ENCODE measurements at regions of chr3 and their contacts with region 1.

Region 1: GRCh38 chr3:50192689-50193141 is 1.3 kb downstream of the GNAT1 start:
- DNase-seq: peak; percentile 16
- ATAC-seq: peak; percentile 79
- H3K4me3 ChIP-seq: no peak overlapping the region
- H3K27ac ChIP-seq: no peak overlapping the region
- H3K4me1 ChIP-seq: no peaks in the 10 kb centered on the region
- H3K27me3 ChIP-seq: no peaks in the 10 kb centered on the region; a peak in 2 of 4 replicates
- CTCF ChIP-seq: peak; percentile 93 to 97 (median 96); a peak in 5 of 6 replicates
- EP300 ChIP-seq: no peak
- POLR2A ChIP-seq: no peak
- RAD21 ChIP-seq: peak; percentile 94

Region 2: DNA sequence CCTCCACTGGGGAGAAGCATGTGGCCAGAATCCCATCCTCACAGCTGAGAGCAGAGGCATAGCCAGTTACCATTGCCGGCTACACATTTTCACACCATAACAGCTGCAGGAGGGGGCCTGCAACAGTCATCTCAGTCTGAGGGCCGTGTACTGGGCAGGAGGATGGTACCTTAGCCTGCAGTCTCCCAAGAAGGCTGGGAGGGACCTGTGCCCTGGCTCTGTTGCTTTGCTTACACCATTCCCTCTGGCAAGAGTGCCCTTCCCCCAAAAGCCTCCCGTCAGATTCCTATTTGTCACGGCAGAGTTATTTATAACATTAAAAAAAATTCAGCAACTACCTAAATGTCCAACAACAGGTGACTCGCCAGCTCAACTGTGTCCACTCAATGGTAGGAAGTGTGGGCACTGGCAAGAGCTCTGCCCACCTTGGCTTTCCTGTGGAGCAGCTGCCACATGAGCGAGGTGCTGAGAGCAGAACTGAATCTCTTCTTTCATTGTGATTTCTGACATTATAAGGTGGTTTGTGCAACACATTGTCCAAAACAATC is 327.4 kb before region 1 on chr3:
- CTCF ChIA-PET with region 1: no interaction called
- POLR2A ChIA-PET with region 1: no interaction called
- RAD21 ChIA-PET with region 1: no interaction called
- SMC1A ChIA-PET with region 1: no interaction called
- in situ Hi-C with region 1: no loop called
- intact Hi-C with region 1: no loop called
- DNase-seq: no peak
- ATAC-seq: no peak
- H3K4me3 ChIP-seq: no peak overlapping the region
- H3K27ac ChIP-seq: no peak overlapping the region
- H3K4me1 ChIP-seq: no peaks in the 10 kb centered on the region
- H3K27me3 ChIP-seq: peaks cover 5 to 8% of the 10 kb centered on the region in 2 experiments; a peak in 3 of 4 replicates
- CTCF ChIP-seq: no peak
- EP300 ChIP-seq: no peak
- POLR2A ChIP-seq: no peak
- RAD21 ChIP-seq: no peak

Region 3: GRCh38 chr3:50088725-50089608 is 103.7 kb before region 1 on chr3 and contains the start of gene RBM5:
- CTCF ChIA-PET with region 1: no interaction called
- POLR2A ChIA-PET with region 1: no interaction called
- RAD21 ChIA-PET with region 1: no interaction called
- SMC1A ChIA-PET with region 1: no interaction called
- in situ Hi-C with region 1: no loop called
- intact Hi-C with region 1: no loop called
- DNase-seq: peak; percentile 64
- ATAC-seq: peak; percentile 100
- H3K4me3 ChIP-seq: peak within 1 kb of the TSS; percentile 78
- H3K27ac ChIP-seq: peak within 1 kb of the TSS; percentile 99
- H3K4me1 ChIP-seq: no peaks in the 10 kb centered on the region; the same call in 1 of the 2 replicates
- H3K27me3 ChIP-seq: no peaks in the 10 kb centered on the region
- CTCF ChIP-seq: no peak
- EP300 ChIP-seq: no peak
- POLR2A ChIP-seq: peak; percentile 91
- RAD21 ChIP-seq: no peak
- polyA plus RNA-seq, gene RBM5: 35.1 to 48.1 TPM

Region 4: DNA sequence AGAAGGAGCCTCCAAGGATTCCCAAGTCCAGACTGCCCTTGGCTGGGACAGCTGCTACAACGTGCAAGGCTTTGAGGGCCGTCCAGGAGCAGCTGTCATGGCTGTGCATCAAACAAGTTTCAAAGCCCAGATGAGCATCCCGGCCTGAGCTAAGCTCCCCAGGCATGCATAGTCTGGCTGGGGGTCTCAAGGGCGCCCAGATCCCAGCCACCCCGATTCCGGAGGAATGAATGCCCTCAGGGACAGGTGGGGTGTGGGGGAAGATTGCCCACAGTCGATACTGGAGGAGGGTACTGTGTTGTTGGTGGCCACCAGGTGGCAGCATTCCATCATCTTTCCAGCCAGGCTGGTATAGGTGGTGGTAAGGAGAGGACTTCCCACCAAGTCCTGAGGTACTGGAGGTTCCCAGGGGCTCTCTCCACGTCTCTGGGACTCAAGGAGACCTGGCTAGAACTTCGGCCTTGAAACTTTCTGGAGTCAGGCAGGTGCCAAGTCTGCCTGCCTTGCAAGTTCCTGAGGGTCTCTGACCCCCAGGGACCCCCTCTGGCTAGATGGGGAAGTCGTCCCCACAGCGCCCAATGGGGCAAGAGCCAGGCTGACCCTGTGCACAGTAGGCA is 71.2 kb before region 1 on chr3:
- CTCF ChIA-PET with region 1: interaction called, 12 read pairs
- POLR2A ChIA-PET with region 1: no interaction called
- RAD21 ChIA-PET with region 1: interaction called, 5 read pairs
- SMC1A ChIA-PET with region 1: no interaction called
- in situ Hi-C with region 1: no loop called
- intact Hi-C with region 1: loop called (anchors 1 kb)
- DNase-seq: peak; percentile 16
- ATAC-seq: peak; percentile 95
- H3K4me3 ChIP-seq: no peak overlapping the region
- H3K27ac ChIP-seq: no peak overlapping the region
- H3K4me1 ChIP-seq: no peaks in the 10 kb centered on the region
- H3K27me3 ChIP-seq: no peaks in the 10 kb centered on the region
- CTCF ChIP-seq: peak; percentile 83 to 85 (median 84)
- EP300 ChIP-seq: no peak
- POLR2A ChIP-seq: peak; percentile 72
- RAD21 ChIP-seq: peak; percentile 62

Region 5: GRCh38 chr3:50213373-50213772 is 20.7 kb after region 1 on chr3:
- CTCF ChIA-PET with region 1: interaction called, 11 read pairs
- POLR2A ChIA-PET with region 1: no interaction called
- RAD21 ChIA-PET with region 1: interaction called, 4 read pairs
- SMC1A ChIA-PET with region 1: interaction called, 3 read pairs
- in situ Hi-C with region 1: no loop called
- intact Hi-C with region 1: no loop called
- DNase-seq: no peak
- ATAC-seq: no peak
- H3K4me3 ChIP-seq: no peak overlapping the region
- H3K27ac ChIP-seq: no peak overlapping the region
- H3K4me1 ChIP-seq: no peaks in the 10 kb centered on the region
- H3K27me3 ChIP-seq: no peaks in the 10 kb centered on the region; a peak in 2 of 4 replicates
- CTCF ChIP-seq: no peak
- EP300 ChIP-seq: no peak
- POLR2A ChIP-seq: no peak
- RAD21 ChIP-seq: no peak

Region 6: DNA sequence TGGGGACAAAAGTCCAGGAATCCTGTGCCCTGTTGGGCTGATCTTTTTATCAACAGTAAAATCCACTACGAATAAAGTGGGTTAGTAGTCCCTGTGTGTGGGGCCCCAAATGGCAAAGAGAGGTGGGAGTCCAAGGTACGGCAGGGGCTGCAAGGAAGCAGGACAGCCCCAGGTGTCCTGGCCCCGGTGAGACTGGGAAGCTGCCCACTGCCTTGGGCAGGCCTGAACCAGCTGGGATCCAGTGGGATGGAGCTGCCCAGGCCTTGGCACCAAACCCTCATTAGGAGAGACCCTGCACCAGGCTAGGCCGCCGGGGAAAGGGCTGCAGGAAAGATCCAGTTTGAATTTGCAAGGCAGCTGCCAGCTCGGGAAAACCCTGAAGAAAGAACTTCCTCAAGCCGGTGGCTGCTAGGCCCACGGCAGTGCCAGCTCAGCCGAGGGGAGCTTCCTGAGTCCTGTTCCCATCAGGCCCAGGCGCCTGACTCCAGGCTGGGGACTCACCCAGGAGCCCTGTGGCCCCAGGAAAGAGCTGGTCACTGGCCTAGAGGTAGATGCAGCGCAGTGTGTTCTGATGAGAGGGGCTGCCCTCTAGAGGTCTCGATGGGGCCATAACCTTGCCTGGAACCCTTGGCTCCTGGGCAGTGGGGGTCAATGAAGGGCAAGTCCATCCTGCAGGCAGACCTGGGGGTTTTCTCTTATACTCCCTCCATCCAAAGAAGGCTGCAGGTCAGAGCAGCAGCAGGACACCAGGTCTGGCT is 28.9 kb after region 1 on chr3:
- CTCF ChIA-PET with region 1: interaction called, 110 read pairs
- POLR2A ChIA-PET with region 1: interaction called, 3 read pairs
- RAD21 ChIA-PET with region 1: interaction called, 72 read pairs
- SMC1A ChIA-PET with region 1: interaction called, 24 read pairs
- in situ Hi-C with region 1: loop called (anchors 5 kb)
- intact Hi-C with region 1: loop called (anchors 1 kb)
- DNase-seq: no peak
- ATAC-seq: no peak
- H3K4me3 ChIP-seq: no peak overlapping the region
- H3K27ac ChIP-seq: no peak overlapping the region
- H3K4me1 ChIP-seq: peaks cover 6% of the 10 kb centered on the region; the same call in 1 of the 2 replicates
- H3K27me3 ChIP-seq: no peaks in the 10 kb centered on the region; a peak in 2 of 4 replicates
- CTCF ChIP-seq: 0 out of 6 replicates have a peak, but pooled peaks of 2 of the 3 experiments have one; percentile 4 to 13
- EP300 ChIP-seq: no peak
- POLR2A ChIP-seq: no peak
- RAD21 ChIP-seq: no peak

Region 7: DNA sequence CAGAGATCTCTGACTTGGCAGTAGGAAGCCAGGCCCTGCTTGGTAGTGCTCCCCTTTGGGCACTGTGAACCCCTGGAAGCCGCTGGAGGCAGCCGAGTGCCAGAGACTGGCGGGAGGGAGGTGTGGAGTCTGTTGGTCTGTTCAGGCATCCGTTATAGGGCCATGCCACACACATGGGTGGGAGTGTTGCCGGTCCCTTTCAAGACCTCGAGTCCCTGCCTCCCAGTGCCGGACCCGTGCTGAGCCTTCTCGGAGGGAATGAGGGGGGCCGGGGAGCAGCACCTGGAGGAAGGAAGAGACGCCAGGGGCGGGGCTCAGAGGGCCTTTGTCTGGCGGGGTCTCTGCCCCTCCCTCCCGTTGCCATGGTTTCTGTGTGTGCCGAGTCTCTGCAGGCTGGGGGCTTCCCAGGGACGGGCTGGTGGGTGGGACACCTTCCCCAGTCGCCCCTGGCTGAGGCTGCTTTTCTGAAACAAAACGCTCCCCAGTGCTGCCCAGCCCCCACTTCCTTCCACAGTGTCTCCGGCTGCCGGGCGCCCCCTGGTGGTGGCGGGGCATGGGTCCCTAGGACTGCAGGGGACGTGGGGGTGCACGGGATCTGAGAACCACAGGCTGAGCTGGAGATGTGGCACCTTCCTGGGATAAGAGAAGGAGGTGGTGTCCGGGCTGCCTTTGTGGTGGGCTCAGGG is 53.3 kb after region 1 on chr3:
- CTCF ChIA-PET with region 1: interaction called, 28 read pairs
- POLR2A ChIA-PET with region 1: no interaction called
- RAD21 ChIA-PET with region 1: interaction called, 12 read pairs
- SMC1A ChIA-PET with region 1: interaction called, 7 read pairs
- in situ Hi-C with region 1: no loop called
- intact Hi-C with region 1: no loop called
- DNase-seq: no peak
- ATAC-seq: peak; percentile 90
- H3K4me3 ChIP-seq: peak overlapping the region; percentile 70
- H3K27ac ChIP-seq: peak overlapping the region; percentile 71
- H3K4me1 ChIP-seq: peaks cover 52% of the 10 kb centered on the region
- H3K27me3 ChIP-seq: no peaks in the 10 kb centered on the region
- CTCF ChIP-seq: peak; percentile 96 to 99 (median 98)
- EP300 ChIP-seq: peak in 1 of 2 experiments; percentile 42; a peak in 1 of 4 replicates
- POLR2A ChIP-seq: peak; percentile 57
- RAD21 ChIP-seq: peak; percentile 89

Region 8: DNA sequence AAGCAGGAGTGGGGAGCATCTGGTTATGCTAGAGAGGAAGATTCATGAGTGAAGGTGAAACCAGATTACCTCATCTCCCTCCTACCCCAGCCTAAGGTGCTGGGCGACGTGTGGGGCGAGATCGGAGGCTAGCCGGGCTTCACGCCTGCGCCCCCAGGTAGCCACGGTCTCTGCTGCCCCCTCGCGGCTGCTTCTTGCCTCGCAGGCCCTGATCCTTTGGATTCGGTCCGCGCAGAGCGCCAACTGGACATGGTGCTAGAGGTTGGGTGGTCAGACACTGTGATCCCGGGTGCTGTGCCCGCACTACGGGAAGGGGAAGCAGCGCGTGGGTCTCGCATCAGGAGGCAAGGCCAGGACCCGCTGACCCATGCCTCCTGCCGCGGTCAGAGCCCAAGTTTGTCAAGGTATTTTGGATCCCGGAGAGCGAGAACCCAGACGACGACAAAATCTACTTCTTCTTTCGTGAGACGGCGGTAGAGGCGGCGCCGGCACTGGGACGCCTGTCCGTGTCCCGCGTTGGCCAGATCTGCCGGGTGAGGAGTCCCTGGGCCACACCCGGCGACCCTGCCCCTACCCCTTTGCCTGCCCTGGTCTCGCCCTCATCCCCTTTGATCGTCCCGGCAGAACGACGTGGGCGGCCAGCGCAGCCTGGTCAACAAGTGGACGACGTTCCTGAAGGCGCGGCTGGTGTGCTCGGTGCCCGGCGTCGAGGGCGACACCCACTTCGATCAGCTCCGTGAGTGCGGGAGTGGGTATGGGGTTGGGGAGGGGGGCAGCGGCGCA is 80.4 kb after region 1 on chr3:
- CTCF ChIA-PET with region 1: interaction called, 7 read pairs
- POLR2A ChIA-PET with region 1: no interaction called
- RAD21 ChIA-PET with region 1: no interaction called
- SMC1A ChIA-PET with region 1: interaction called, 5 read pairs
- in situ Hi-C with region 1: loop called (anchors 5 kb)
- intact Hi-C with region 1: loop called (anchors 1 kb)
- DNase-seq: peak; percentile 44
- ATAC-seq: peak; percentile 95
- H3K4me3 ChIP-seq: no peak overlapping the region
- H3K27ac ChIP-seq: no peak overlapping the region
- H3K4me1 ChIP-seq: peaks cover 6% of the 10 kb centered on the region
- H3K27me3 ChIP-seq: peaks cover 7 to 8% of the 10 kb centered on the region in 2 experiments; a peak in 3 of 4 replicates
- CTCF ChIP-seq: peak; percentile 98 to 99 (median 98); a peak in 5 of 6 replicates
- EP300 ChIP-seq: no peak
- POLR2A ChIP-seq: no peak
- RAD21 ChIP-seq: peak; percentile 93

Region 9: DNA sequence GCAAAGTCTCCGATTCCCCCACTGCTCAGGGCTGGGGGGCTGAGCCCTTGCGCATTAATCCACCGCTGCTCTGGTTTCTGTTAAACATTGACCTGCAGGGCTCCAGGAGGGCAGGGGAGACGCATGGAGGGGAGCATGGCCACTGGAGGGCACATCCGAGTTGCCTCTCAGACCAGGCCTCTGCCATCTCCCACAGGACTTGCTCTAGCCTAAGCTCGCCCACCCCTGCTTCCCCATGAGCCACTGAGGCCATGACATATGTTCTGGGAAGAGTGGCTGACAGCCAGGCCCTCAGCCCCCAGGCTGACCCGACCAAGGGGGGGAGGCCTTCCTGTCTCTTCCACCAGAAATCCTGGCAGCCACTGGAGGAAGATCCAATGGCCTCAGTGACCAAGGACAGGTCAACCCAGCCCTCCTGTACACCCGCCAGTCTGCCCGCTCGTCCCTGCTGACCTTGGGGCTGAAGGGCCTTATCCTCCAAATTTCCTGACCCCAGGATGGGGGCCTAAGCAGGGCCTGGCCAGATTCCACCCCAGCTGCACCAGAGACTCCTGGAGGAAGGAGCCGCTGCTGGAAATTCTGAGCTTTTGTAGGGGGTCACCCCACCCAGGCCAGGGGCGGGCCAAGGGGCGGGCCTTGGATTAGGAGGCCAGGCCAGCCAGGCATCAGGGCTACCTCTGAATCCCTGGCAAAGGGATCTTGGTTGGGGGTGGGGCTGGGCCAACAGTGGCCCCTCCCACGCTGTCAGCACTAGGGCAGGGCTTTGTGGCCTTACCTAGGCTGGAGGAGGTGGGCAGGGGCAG is 110.5 kb after region 1 on chr3 and contains the start of gene HYAL1:
- CTCF ChIA-PET with region 1: no interaction called
- POLR2A ChIA-PET with region 1: no interaction called
- RAD21 ChIA-PET with region 1: no interaction called
- SMC1A ChIA-PET with region 1: no interaction called
- in situ Hi-C with region 1: no loop called
- intact Hi-C with region 1: no loop called
- DNase-seq: no peak
- ATAC-seq: no peak
- H3K4me3 ChIP-seq: no peak within 1 kb of the TSS
- H3K27ac ChIP-seq: no peak within 1 kb of the TSS
- H3K4me1 ChIP-seq: peaks cover 1% of the 10 kb centered on the region
- H3K27me3 ChIP-seq: no peaks in the 10 kb centered on the region
- CTCF ChIP-seq: no peak
- EP300 ChIP-seq: no peak
- POLR2A ChIP-seq: no peak
- RAD21 ChIP-seq: no peak
- polyA plus RNA-seq, gene HYAL1: not detected

Region 10: DNA sequence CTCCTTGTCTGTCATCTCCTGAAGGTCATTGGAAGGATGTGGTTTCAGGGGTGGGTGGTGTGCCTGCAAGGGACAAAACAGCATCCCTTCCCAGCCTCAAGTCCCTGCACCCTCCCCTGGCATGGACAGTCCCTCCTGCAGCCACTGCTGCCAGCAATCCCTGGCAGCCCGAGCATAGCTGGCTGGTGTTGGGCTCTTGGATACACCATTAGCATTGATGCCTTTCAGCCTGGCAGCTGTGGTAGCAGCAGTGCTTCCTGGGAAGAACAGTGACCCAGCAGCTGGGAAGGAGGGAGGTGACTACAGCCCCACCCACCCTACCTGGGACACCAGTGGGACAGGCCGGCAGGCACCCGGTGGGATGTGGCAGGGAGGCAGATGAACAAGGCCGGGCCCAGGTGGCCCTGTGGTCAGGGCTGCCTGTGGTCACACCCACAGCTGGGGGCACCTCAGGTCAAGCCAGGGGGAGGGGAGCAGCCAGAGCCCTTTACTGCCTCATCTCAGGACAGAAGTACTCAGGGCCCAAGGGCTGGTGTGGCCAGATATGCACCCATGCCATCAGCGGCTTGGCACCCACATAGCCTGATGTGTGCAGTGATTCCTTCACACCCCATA is 199.5 kb after region 1 on chr3:
- CTCF ChIA-PET with region 1: no interaction called
- POLR2A ChIA-PET with region 1: no interaction called
- RAD21 ChIA-PET with region 1: no interaction called
- SMC1A ChIA-PET with region 1: no interaction called
- in situ Hi-C with region 1: no loop called
- intact Hi-C with region 1: no loop called
- DNase-seq: no peak
- ATAC-seq: peak; percentile 23; the same call in 2 of the 3 replicates
- H3K4me3 ChIP-seq: no peak overlapping the region
- H3K27ac ChIP-seq: no peak overlapping the region
- H3K4me1 ChIP-seq: no peaks in the 10 kb centered on the region
- H3K27me3 ChIP-seq: no peaks in the 10 kb centered on the region; a peak in 3 of 4 replicates
- CTCF ChIP-seq: no peak
- EP300 ChIP-seq: no peak
- POLR2A ChIP-seq: no peak
- RAD21 ChIP-seq: no peak